ENCODE measurements at regions of chr11 and their contacts with region 1.

Region 1: DNA sequence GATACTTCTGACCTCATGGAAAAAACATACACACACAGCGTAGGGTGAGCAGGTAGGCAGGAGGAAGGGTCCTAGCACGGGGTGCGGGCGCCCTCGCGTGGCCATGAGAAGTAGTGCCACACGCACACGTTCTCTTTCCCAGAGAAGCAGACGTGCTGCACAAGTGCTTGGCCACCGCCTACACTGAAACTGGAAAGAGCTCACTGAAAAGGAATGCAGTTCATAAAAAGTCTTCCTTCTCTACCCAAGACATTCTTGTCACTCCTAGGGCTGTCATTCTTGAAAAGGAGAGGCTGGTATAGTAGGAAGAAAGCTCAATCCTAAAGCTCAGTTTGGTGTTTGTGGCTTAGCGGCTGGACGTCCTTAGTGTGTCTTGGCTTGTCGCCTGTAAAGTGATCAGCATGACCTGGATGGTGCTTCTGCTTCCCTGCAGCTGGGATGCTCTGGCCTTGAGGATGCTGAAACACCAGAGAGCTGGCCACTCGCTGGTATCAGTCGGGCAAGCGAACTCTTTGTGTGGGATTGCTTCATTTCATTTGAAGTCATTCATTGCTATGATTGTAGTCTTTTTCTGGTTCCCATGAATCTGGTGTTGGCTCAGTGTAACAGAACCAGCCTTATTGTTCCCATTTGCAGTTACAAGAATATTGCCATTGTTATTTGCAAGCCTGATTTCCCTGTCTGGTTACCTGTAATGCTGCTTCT is 303.8 kb downstream of the NTM start:
- DNase-seq: peak; percentile 24
- H3K4me3 Mint-ChIP-seq: no peak overlapping the region
- H3K27ac Mint-ChIP-seq: no peak overlapping the region
- H3K4me1 Mint-ChIP-seq: no peaks in the 10 kb centered on the region
- H3K27me3 Mint-ChIP-seq: no peaks in the 10 kb centered on the region

Region 2: DNA sequence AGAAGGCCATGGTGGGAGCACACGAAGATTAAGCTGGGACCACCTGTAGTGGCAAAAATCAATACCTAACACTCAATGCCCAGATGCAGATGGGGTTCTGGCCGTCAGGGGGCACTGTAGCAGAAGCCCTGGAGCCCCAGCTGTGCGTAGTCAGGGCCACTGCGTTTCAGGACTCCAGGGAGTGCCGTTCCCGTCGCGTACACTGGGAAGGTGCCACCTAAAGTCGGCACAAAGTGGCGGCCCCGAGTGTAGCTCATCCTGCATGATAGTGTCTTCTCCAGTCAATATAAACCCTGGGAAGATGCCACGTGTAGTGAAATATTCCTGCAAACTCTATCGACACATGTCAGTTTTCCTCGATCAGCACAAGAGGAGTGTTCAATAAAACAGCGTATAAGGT is 427.5 kb before region 1 on chr11:
- intact Hi-C with region 1: loop called (anchors 5 kb)
- DNase-seq: no peak
- H3K4me3 Mint-ChIP-seq: no peak overlapping the region
- H3K27ac Mint-ChIP-seq: no peak overlapping the region
- H3K4me1 Mint-ChIP-seq: no peaks in the 10 kb centered on the region
- H3K27me3 Mint-ChIP-seq: peaks cover 11% of the 10 kb centered on the region

Region 3: DNA sequence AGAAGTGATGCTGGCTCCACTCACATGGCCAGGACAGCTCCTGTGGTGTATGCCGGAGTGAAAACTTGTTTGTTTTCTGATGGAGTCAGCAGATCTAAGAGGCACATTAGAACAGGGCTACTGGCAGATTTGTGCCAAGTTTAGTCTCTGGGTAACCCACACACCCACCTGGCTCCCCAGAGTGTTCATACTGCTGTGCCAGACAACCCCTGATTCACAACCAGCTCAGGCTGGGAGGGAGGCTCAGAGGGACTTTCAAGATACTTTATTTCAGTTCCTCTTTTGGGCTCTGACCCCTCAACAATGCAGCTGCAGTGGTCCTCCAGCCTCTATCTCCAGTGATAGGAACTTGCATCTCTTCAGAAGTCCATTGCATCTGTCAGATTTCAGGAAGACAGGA is 295.3 kb before region 1 on chr11:
- intact Hi-C with region 1: no loop called
- DNase-seq: no peak
- H3K4me3 Mint-ChIP-seq: no peak overlapping the region
- H3K27ac Mint-ChIP-seq: no peak overlapping the region
- H3K4me1 Mint-ChIP-seq: no peaks in the 10 kb centered on the region
- H3K27me3 Mint-ChIP-seq: peaks cover 2% of the 10 kb centered on the region

Measured in activated T-helper 1 cell treated with anti-CD3 and anti-CD28 coated beads, Interleukin-12 subunit alpha, Interleukin-12 subunit beta, Interleukin-2, Interleukin-4 antibody, amounts not matched to agents 30 ng/mL and 10 ng/mL and 1 ng/mL, durations not matched to agents 14 hours and 24 hours and 36 hours (primary cell).